ENCODE measurements at regions of chr4 and their contacts with region 1.

Region 1: GRCh38 chr4:150964754-150965153 is 50.3 kb downstream of the LRBA start:
- DNase-seq: no peak
- ATAC-seq: no peak
- H3K4me3 Mint-ChIP-seq: no peak overlapping the region
- H3K27ac Mint-ChIP-seq: no peak overlapping the region
- H3K4me1 Mint-ChIP-seq: peaks cover 16% of the 10 kb centered on the region
- H3K27me3 Mint-ChIP-seq: no peaks in the 10 kb centered on the region

Region 2: DNA sequence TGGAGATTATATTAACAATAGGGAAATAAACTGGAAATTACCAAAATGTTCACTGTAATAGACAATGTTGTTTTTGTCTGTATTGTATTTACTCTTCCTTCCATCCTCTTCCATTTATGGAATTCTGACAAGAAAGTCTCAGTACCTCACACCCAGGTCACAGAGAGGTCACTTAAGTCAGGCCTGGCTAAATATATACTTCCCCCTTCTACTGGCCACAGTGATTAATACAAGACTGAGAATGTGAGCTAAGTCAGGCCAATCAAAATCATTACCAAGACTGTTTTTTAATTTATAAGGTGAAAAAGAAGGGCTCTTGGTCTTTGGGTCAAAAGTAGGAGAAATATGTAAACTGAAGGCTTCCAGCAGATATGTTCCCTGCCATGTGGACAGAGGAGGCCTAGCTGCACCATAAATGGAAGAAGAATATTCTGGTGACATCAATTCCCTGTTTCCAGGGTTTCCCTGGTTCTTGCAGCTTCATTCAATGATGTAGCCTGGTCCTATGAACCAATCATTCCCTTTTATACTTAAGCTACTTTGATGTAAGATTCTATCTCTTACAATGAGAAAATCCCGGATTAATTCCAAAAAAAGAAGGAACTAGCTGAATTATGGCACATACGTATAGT is 14.0 kb before region 1 on chr4:
- CTCF ChIA-PET with region 1: no interaction called
- POLR2A ChIA-PET with region 1: no interaction called
- intact Hi-C with region 1: loop called (anchors 1 to 2 kb)
- DNase-seq: no peak
- ATAC-seq: no peak
- H3K4me3 Mint-ChIP-seq: no peak overlapping the region
- H3K27ac Mint-ChIP-seq: no peak overlapping the region
- H3K4me1 Mint-ChIP-seq: peaks cover 51% of the 10 kb centered on the region
- H3K27me3 Mint-ChIP-seq: no peaks in the 10 kb centered on the region